B cell (primary cell): ENCODE measurements at regions of chr2 and their contacts with region 1.

Region 1: GRCh38 chr2:60353406-60353800 is 200.1 kb downstream of the BCL11A start:
- DNase-seq: no peak
- ATAC-seq: peak; percentile 1
- H3K4me3 ChIP-seq: peak overlapping the region in 2 of 5 experiments; percentile 8 to 10
- H3K4me3 Mint-ChIP-seq: peak overlapping the region; percentile 54
- H3K27ac ChIP-seq: peak overlapping the region; percentile 95
- H3K27ac Mint-ChIP-seq: peak overlapping the region; percentile 99
- H3K4me1 ChIP-seq: peaks cover 98% of the 10 kb centered on the region in 2 donors
- H3K4me1 Mint-ChIP-seq: peaks cover 98% of the 10 kb centered on the region
- H3K27me3 ChIP-seq: no peaks in the 10 kb centered on the region
- H3K27me3 Mint-ChIP-seq: no peaks in the 10 kb centered on the region
- CTCF ChIP-seq: no peak

Region 2: GRCh38 chr2:59888015-59888414 is 465.4 kb before region 1 on chr2:
- CTCF ChIA-PET with region 1: interaction called, 3 read pairs
- POLR2A ChIA-PET with region 1: interaction called, 3 read pairs
- intact Hi-C with region 1: loop called (anchors 5 kb)
- DNase-seq: peak; percentile 73
- ATAC-seq: peak; percentile 96
- H3K4me3 ChIP-seq: peak overlapping the region in 1 of 5 experiments; percentile 33
- H3K4me3 Mint-ChIP-seq: peak overlapping the region; percentile 38
- H3K27ac ChIP-seq: peak overlapping the region; percentile 66 to 83
- H3K27ac Mint-ChIP-seq: peak overlapping the region; percentile 70
- H3K4me1 ChIP-seq: peaks cover 36 to 37% of the 10 kb centered on the region in 2 donors
- H3K4me1 Mint-ChIP-seq: peaks cover 31% of the 10 kb centered on the region
- H3K27me3 ChIP-seq: no peaks in the 10 kb centered on the region
- H3K27me3 Mint-ChIP-seq: no peaks in the 10 kb centered on the region
- CTCF ChIP-seq: peak; percentile 22

Region 3: GRCh38 chr2:60337140-60337494 is 16.3 kb before region 1 on chr2:
- CTCF ChIA-PET with region 1: interaction called, 15 read pairs
- POLR2A ChIA-PET with region 1: interaction called, 20 read pairs
- intact Hi-C with region 1: loop called (anchors 1 kb)
- DNase-seq: peak; percentile 68
- ATAC-seq: peak; percentile 83
- H3K4me3 ChIP-seq: no peak overlapping the region
- H3K4me3 Mint-ChIP-seq: peak overlapping the region; percentile 27
- H3K27ac ChIP-seq: peak overlapping the region; percentile 89 to 91
- H3K27ac Mint-ChIP-seq: peak overlapping the region; percentile 91
- H3K4me1 ChIP-seq: peaks cover 46 to 72% of the 10 kb centered on the region in 2 donors
- H3K4me1 Mint-ChIP-seq: peaks cover 66% of the 10 kb centered on the region
- H3K27me3 ChIP-seq: no peaks in the 10 kb centered on the region
- H3K27me3 Mint-ChIP-seq: no peaks in the 10 kb centered on the region
- CTCF ChIP-seq: no peak

Region 4: GRCh38 chr2:60385648-60386047 is 32.2 kb after region 1 on chr2:
- CTCF ChIA-PET with region 1: interaction called, 5 read pairs
- POLR2A ChIA-PET with region 1: no interaction called
- intact Hi-C with region 1: loop called (anchors 1 kb)
- DNase-seq: no peak
- ATAC-seq: no peak
- H3K4me3 ChIP-seq: no peak overlapping the region
- H3K4me3 Mint-ChIP-seq: no peak overlapping the region
- H3K27ac ChIP-seq: no peak overlapping the region
- H3K27ac Mint-ChIP-seq: peak overlapping the region; percentile 60
- H3K4me1 ChIP-seq: peaks cover 11 to 22% of the 10 kb centered on the region in 2 donors
- H3K4me1 Mint-ChIP-seq: peaks cover 55% of the 10 kb centered on the region
- H3K27me3 ChIP-seq: no peaks in the 10 kb centered on the region
- H3K27me3 Mint-ChIP-seq: no peaks in the 10 kb centered on the region
- CTCF ChIP-seq: no peak

Region 5: GRCh38 chr2:60446413-60447267 is 93.2 kb after region 1 on chr2:
- CTCF ChIA-PET with region 1: interaction called, 42 read pairs
- POLR2A ChIA-PET with region 1: interaction called, 8 read pairs
- intact Hi-C with region 1: loop called (anchors 2 kb)
- DNase-seq: peak; percentile 83
- ATAC-seq: peak; percentile 72
- H3K4me3 ChIP-seq: peak overlapping the region in 4 of 5 experiments; percentile 7 to 32 (median 28)
- H3K4me3 Mint-ChIP-seq: peak overlapping the region; percentile 77
- H3K27ac ChIP-seq: peak overlapping the region; percentile 88 to 99
- H3K27ac Mint-ChIP-seq: peak overlapping the region; percentile 97
- H3K4me1 ChIP-seq: peaks cover 85 to 87% of the 10 kb centered on the region in 2 donors
- H3K4me1 Mint-ChIP-seq: peaks cover 84% of the 10 kb centered on the region
- H3K27me3 ChIP-seq: no peaks in the 10 kb centered on the region
- H3K27me3 Mint-ChIP-seq: no peaks in the 10 kb centered on the region
- CTCF ChIP-seq: no peak